ENCODE measurements at regions of chr1 and their contacts with region 1.

Region 1: GRCh38 chr1:203625628-203626019 is 1.0 kb upstream of the ATP2B4 start:
- DNase-seq: no peak
- ATAC-seq: no peak
- H3K4me3 ChIP-seq: no peak overlapping the region
- H3K27ac ChIP-seq: no peak overlapping the region
- H3K4me1 ChIP-seq: peaks cover 17% of the 10 kb centered on the region
- H3K27me3 ChIP-seq: no peaks in the 10 kb centered on the region
- CTCF ChIP-seq: 0 out of 2 replicates have a peak, but pooled peaks have one; percentile 21
- POLR2A ChIP-seq: no peak
- RAD21 ChIP-seq: peak; percentile 33; the same call in 1 of the 2 replicates

Region 2: GRCh38 chr1:203504397-203505250 is 121.0 kb before region 1 on chr1:
- CTCF ChIA-PET with region 1: interaction called, 3 read pairs
- POLR2A ChIA-PET with region 1: no interaction called
- dilution Hi-C with region 1: no loop called
- in situ Hi-C with region 1: loop called (anchors 5 kb)
- intact Hi-C with region 1: loop called (anchors 1 kb)
- DNase-seq: peak; percentile 80
- ATAC-seq: peak; percentile 80
- H3K4me3 ChIP-seq: no peak overlapping the region
- H3K27ac ChIP-seq: no peak overlapping the region; the same call in 1 of the 2 replicates
- H3K4me1 ChIP-seq: peaks cover 28% of the 10 kb centered on the region
- H3K27me3 ChIP-seq: no peaks in the 10 kb centered on the region
- CTCF ChIP-seq: peak; percentile 83
- POLR2A ChIP-seq: peak; percentile 51; the same call in 1 of the 2 replicates
- RAD21 ChIP-seq: peak; percentile 89

Region 3: DNA sequence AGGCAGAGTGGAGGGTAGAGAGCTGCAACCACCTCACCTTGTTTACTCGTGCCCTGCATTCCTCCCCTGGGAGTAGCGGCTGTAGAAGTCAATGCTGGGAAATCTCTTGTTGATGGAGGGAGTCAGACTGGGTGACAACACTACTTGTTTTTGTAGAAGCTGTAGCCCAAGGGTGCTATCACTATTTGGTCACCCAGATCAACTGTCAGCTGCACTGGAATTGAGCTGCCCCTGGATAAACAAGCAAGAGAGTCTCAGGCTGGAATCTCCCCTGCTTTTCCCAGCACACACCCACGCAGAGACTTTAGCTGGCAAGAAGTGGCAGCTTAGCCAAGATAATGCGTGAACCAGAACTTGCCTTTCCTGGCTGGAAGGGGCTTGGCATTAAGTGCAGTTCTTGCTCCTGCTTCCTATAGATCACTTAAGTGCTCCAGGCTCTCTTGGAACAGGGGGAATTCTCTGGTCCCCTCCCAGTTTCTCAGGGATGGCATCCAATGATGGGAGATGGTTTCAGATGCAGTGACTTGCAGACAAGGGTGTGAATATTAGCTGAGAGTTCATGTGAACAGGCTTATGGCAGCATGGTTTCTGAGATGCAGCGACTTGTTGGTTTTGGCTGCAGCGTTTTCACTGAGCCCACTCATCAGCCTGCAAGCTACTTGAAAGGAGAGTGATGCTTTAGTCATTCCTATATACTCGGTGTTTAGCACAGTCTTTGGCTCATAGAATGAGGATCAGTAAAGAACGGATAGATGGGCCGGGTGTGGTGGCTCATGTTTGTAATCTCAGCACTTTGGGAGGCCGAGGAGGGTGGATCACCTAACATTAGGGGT is 17.8 kb after region 1 on chr1:
- CTCF ChIA-PET with region 1: no interaction called
- POLR2A ChIA-PET with region 1: no interaction called
- dilution Hi-C with region 1: no loop called
- in situ Hi-C with region 1: no loop called
- intact Hi-C with region 1: loop called (anchors 2 kb)
- DNase-seq: peak; percentile 82
- ATAC-seq: peak; percentile 35
- H3K4me3 ChIP-seq: no peak overlapping the region
- H3K27ac ChIP-seq: peak overlapping the region; percentile 15; the same call in 1 of the 2 replicates
- H3K4me1 ChIP-seq: peaks cover 24% of the 10 kb centered on the region
- H3K27me3 ChIP-seq: no peaks in the 10 kb centered on the region
- CTCF ChIP-seq: no peak
- POLR2A ChIP-seq: no peak
- RAD21 ChIP-seq: peak; percentile 21; the same call in 1 of the 2 replicates

Region 4: DNA sequence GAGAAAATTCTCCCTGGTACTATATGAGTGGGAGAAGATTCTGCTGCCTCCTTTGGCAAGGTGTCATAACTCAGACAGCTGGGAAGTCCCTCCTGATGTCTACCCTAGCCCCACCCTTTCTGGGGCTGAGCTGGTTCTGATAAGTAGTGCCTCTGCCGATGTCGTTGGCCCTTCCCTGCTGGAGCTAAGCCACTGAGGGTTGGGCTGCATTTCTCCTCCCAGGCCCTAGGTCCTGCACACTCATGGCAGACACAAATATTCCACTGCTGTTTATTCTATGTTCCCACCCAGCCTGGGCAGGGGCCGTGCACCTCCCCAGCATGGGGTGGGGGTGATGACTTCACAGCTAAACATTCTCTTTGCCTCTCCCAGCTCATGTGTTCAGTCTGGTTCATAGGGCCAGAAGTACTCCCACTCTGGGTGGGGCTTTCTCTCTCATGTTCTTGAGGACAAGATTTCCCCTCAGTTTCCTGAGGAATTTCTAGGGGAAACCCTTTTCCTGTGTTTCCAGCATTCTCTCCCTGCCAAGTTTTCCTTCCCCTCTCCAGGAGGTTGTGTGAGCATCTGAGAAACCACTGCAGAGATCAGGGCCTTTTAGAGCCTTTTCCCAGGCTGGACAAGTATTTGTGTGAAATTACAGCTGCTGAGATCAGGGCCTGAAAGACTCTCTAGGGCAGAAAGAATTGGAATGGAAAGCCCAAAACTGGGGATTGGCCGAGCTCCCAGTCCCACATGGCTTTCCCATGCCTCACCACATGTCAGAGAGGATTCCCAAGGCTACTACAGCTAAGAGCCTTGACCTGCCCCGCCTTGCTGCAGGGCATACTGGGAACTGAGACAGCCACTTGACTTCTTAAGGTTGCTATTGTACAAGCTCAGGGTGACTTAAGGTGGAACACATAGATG is 67.2 kb after region 1 on chr1:
- CTCF ChIA-PET with region 1: interaction called, 3 read pairs
- POLR2A ChIA-PET with region 1: no interaction called
- dilution Hi-C with region 1: no loop called
- in situ Hi-C with region 1: no loop called
- intact Hi-C with region 1: loop called (anchors 1 kb)
- DNase-seq: peak; percentile 96
- ATAC-seq: peak; percentile 87
- H3K4me3 ChIP-seq: no peak overlapping the region
- H3K27ac ChIP-seq: peak overlapping the region; percentile 59
- H3K4me1 ChIP-seq: peaks cover 14% of the 10 kb centered on the region
- H3K27me3 ChIP-seq: no peaks in the 10 kb centered on the region
- CTCF ChIP-seq: 0 out of 2 replicates have a peak, but pooled peaks have one; percentile 6
- POLR2A ChIP-seq: no peak; the same call in 1 of the 2 replicates
- RAD21 ChIP-seq: no peak; the same call in 1 of the 2 replicates

Region 5: GRCh38 chr1:203702130-203702577 is 76.5 kb after region 1 on chr1:
- CTCF ChIA-PET with region 1: interaction called, 5 read pairs
- POLR2A ChIA-PET with region 1: no interaction called
- dilution Hi-C with region 1: no loop called
- in situ Hi-C with region 1: loop called (anchors 5 kb)
- intact Hi-C with region 1: no loop called
- DNase-seq: peak; percentile 56
- ATAC-seq: peak; percentile 71
- H3K4me3 ChIP-seq: no peak overlapping the region
- H3K27ac ChIP-seq: no peak overlapping the region
- H3K4me1 ChIP-seq: no peaks in the 10 kb centered on the region
- H3K27me3 ChIP-seq: no peaks in the 10 kb centered on the region
- CTCF ChIP-seq: peak; percentile 71
- POLR2A ChIP-seq: no peak
- RAD21 ChIP-seq: peak; percentile 89

Region 6: GRCh38 chr1:203789956-203790355 is 164.3 kb after region 1 on chr1:
- CTCF ChIA-PET with region 1: no interaction called
- POLR2A ChIA-PET with region 1: no interaction called
- dilution Hi-C with region 1: no loop called
- in situ Hi-C with region 1: no loop called
- intact Hi-C with region 1: no loop called
- DNase-seq: no peak
- ATAC-seq: no peak
- H3K4me3 ChIP-seq: no peak overlapping the region
- H3K27ac ChIP-seq: no peak overlapping the region
- H3K4me1 ChIP-seq: no peaks in the 10 kb centered on the region
- H3K27me3 ChIP-seq: no peaks in the 10 kb centered on the region
- CTCF ChIP-seq: no peak
- POLR2A ChIP-seq: no peak
- RAD21 ChIP-seq: no peak

Region 7: GRCh38 chr1:203813581-203814341 is 188.1 kb after region 1 on chr1:
- CTCF ChIA-PET with region 1: no interaction called
- POLR2A ChIA-PET with region 1: no interaction called
- dilution Hi-C with region 1: no loop called
- in situ Hi-C with region 1: no loop called
- intact Hi-C with region 1: no loop called
- DNase-seq: no peak
- ATAC-seq: no peak
- H3K4me3 ChIP-seq: no peak overlapping the region
- H3K27ac ChIP-seq: no peak overlapping the region
- H3K4me1 ChIP-seq: no peaks in the 10 kb centered on the region
- H3K27me3 ChIP-seq: no peaks in the 10 kb centered on the region
- CTCF ChIP-seq: no peak
- POLR2A ChIP-seq: no peak
- RAD21 ChIP-seq: no peak

Region 8: GRCh38 chr1:203954788-203955566 is 329.4 kb after region 1 on chr1:
- CTCF ChIA-PET with region 1: no interaction called
- POLR2A ChIA-PET with region 1: no interaction called
- dilution Hi-C with region 1: no loop called
- in situ Hi-C with region 1: no loop called
- intact Hi-C with region 1: no loop called
- DNase-seq: no peak
- ATAC-seq: no peak
- H3K4me3 ChIP-seq: no peak overlapping the region
- H3K27ac ChIP-seq: no peak overlapping the region
- H3K4me1 ChIP-seq: no peaks in the 10 kb centered on the region
- H3K27me3 ChIP-seq: peaks cover 2% of the 10 kb centered on the region; the same call in 1 of the 2 replicates
- CTCF ChIP-seq: no peak
- POLR2A ChIP-seq: no peak
- RAD21 ChIP-seq: no peak

Measured in IMR-90 (cell line).